Transverse colon (tissue), 4 donors: ENCODE measurements at regions of chr11 and their contacts with region 1.

Region 1: GRCh38 chr11:69240332-69241074 is 53.5 kb upstream of the MYEOV start:
- DNase-seq: peak; percentile 60
- H3K4me3 ChIP-seq: no peak overlapping the region
- H3K27ac ChIP-seq: no peak overlapping the region
- H3K4me1 ChIP-seq: no peaks in the 10 kb centered on the region
- H3K27me3 ChIP-seq: no peaks in the 10 kb centered on the region
- CTCF ChIP-seq: peak; percentile 18 to 57 (median 48)
- EP300 ChIP-seq: no peak
- POLR2A ChIP-seq: no peak

Region 2: DNA sequence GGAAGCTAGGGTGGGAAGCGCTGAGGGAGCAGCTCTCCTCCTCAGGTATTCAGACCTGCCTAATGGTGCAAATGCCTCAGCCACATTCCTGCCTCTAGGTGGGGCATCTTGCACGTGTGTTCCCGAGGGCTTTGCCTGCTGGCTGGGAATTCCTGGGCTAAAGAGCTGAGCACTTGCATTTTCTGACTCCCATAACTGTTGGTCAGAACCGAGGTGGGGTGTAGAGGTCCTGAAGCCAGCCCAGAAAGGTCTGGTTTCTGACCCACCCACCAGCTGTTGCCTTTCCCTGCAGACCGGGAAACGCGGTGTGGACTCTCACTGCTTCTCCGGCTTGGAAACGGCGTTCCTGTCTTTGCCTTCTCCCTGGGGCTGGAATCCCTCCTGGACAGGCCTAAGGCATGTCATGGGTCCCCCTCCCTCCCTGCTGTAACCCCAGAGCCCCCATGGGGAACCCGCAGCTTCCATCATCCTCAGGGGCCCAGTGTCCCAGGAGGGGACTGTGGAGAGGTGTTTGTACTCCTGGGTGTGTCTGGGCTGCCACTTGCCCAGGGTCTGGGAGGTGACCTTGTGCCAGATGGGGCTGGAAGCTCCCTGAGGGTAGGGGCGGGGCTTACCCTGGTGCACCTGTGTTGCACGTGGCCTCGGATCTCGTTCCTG is 108.7 kb before region 1 on chr11:
- in situ Hi-C with region 1: loop called in 1 of 4 experiments (anchors 25 kb)
- intact Hi-C with region 1: no loop called
- DNase-seq: peak; percentile 85
- H3K4me3 ChIP-seq: no peak overlapping the region
- H3K27ac ChIP-seq: no peak overlapping the region
- H3K4me1 ChIP-seq: peaks cover 0 to 4% (median 2%) of the 10 kb centered on the region in 4 donors
- H3K27me3 ChIP-seq: no peaks in the 10 kb centered on the region
- CTCF ChIP-seq: peak; percentile 69 to 94 (median 81)
- EP300 ChIP-seq: no peak
- POLR2A ChIP-seq: no peak